AG04450 (cell line): ENCODE measurements at regions of chr14 and their contacts with region 1.

Region 1: GRCh38 chr14:20343092-20343861 is at the start of gene PARP2:
- DNase-seq: peak; percentile 99
- H3K4me3 ChIP-seq: peak within 1 kb of the TSS; percentile 98
- H3K27ac ChIP-seq: peak within 1 kb of the TSS; percentile 87
- H3K27me3 ChIP-seq: no peaks in the 10 kb centered on the region
- CTCF ChIP-seq: no peak
- polyA plus RNA-seq, gene PARP2: 11.8 and 12.3 TPM in 2 replicates

Region 2: GRCh38 chr14:20195911-20196310 is 147.4 kb before region 1 on chr14:
- CTCF ChIA-PET with region 1: no interaction called
- POLR2A ChIA-PET with region 1: no interaction called
- DNase-seq: no peak
- H3K4me3 ChIP-seq: no peak overlapping the region
- H3K27ac ChIP-seq: no peak overlapping the region
- H3K27me3 ChIP-seq: no peaks in the 10 kb centered on the region
- CTCF ChIP-seq: no peak

Region 3: DNA sequence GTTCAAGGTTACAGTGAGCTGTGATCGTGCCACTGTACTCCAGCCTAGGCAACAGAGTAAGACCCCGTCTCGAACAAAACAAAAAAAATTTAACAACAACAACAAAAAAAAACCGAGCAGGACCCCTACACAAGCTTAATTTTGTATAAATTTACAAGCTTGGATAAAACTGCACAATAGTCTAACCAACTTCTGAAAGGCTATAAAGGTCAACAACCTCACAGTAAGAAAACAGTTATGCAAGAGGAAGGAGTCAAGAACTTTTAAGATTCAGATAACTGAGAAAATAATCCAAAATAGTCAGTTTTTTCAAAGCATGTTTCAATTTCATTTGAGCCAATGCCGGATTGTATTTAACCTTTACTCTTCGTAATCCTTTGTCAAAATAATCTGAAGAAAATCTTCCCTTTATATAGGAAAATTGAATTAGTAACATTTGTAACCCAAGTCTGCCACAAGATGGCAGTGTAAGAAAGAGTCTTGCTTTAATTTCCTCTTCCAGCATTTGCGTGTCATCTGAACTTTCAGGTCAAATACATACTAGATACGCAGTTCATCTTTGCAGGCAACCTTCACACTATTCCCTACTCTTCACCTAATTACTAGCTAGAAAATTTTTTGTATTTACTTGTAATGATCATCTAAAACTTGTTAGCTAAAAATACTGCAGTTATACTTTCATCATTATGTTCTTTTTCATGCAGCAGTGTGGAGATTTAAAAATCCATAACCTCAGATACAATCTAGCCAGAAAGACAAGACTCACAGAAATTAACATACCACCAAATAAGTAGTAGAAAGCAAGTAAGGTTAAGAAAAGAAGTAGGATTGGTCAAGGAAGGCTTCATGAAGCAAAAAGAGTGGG is 16.0 kb before region 1 on chr14:
- CTCF ChIA-PET with region 1: interaction called, 158 read pairs
- POLR2A ChIA-PET with region 1: interaction called, 11 read pairs
- DNase-seq: peak; percentile 54
- H3K4me3 ChIP-seq: no peak overlapping the region
- H3K27ac ChIP-seq: no peak overlapping the region
- H3K27me3 ChIP-seq: no peaks in the 10 kb centered on the region
- CTCF ChIP-seq: peak; percentile 72

Region 4: GRCh38 chr14:20413045-20413799 is 69.9 kb after region 1 on chr14 and contains the start of gene TEP1:
- CTCF ChIA-PET with region 1: interaction called, 8 read pairs
- POLR2A ChIA-PET with region 1: interaction called, 19 read pairs
- DNase-seq: peak; percentile 29
- H3K4me3 ChIP-seq: peak within 1 kb of the TSS; percentile 88
- H3K27ac ChIP-seq: peak within 1 kb of the TSS; percentile 94
- H3K27me3 ChIP-seq: no peaks in the 10 kb centered on the region
- CTCF ChIP-seq: no peak
- polyA plus RNA-seq, gene TEP1: 18.6 and 18.8 TPM in 2 replicates

Region 5: GRCh38 chr14:20461274-20462001 is 118.2 kb after region 1 on chr14 and contains the start of gene PIP4P1:
- CTCF ChIA-PET with region 1: no interaction called
- POLR2A ChIA-PET with region 1: interaction called, 25 read pairs
- DNase-seq: peak; percentile 100
- H3K4me3 ChIP-seq: peak within 1 kb of the TSS; percentile 94
- H3K27ac ChIP-seq: peak within 1 kb of the TSS; percentile 78
- H3K27me3 ChIP-seq: no peaks in the 10 kb centered on the region
- CTCF ChIP-seq: no peak
- polyA plus RNA-seq, gene PIP4P1: 24.5 and 29.9 TPM in 2 replicates

Region 6: GRCh38 chr14:20613094-20614037 is 270.1 kb after region 1 on chr14:
- CTCF ChIA-PET with region 1: interaction called, 5 read pairs
- POLR2A ChIA-PET with region 1: interaction called, 13 read pairs
- DNase-seq: peak; percentile 97
- H3K4me3 ChIP-seq: peak overlapping the region; percentile 70
- H3K27ac ChIP-seq: peak overlapping the region; percentile 42
- H3K27me3 ChIP-seq: no peaks in the 10 kb centered on the region
- CTCF ChIP-seq: peak; percentile 76